Activated naive CD4-positive, alpha-beta T cell treated with anti-CD3 and anti-CD28 coated beads for 36 hours (primary cell): ENCODE measurements at regions of chr10 and their contacts with region 1.

Region 1: DNA sequence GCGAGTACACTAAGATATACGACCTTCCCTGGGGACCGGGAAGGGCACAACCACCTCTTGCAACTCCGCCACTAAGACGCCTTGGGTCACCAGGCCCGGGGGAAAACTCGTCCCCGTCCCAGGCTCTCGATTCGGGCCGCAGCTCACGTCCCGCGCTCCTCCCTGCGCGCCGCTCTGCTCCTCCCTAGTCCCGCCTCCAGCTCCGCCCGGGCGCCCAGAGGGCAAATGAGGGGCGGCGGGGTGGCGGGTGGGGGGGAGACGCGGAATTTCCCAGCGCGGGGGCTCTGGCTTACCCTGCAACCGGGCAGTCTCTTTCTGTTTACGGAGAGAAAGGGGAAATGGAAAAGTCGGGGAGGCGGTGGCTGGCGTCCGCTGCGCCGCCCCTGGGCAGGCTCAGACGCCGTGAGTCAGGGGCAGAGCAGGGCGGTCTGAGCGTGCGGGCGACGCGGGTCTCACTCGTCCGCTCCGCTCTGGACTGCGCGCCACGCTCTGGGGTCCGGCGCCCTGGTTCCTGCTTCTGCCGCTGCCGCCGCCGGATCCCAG is at the start of gene MAP3K8:
- DNase-seq: peak; percentile 87
- H3K4me3 Mint-ChIP-seq: peak within 1 kb of the TSS; percentile 84
- H3K27ac Mint-ChIP-seq: peak within 1 kb of the TSS; percentile 67
- H3K4me1 Mint-ChIP-seq: peaks cover 41% of the 10 kb centered on the region
- H3K27me3 Mint-ChIP-seq: no peaks in the 10 kb centered on the region
- total RNA-seq, gene MAP3K8: 13.6 to 14.5 TPM

Region 2: DNA sequence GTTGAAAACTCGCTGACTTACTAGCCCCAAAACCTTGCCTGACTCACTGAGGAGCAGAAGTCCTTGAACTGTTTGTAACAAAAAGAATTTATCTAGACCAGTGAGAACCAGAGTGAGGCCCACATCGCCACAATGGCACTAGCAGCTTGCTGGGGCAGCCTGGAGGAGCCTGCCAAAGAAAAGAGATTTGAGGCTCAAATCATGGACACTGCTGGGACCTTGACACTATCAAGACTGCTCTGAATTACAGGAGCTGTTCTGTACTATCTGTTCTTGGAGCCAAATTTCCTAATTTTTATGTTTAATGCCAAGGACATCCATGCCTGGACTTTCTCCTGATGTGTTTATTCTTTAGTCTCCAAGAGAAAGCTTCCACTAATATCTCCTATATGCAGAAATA is 292.4 kb before region 1 on chr10:
- CTCF ChIA-PET with region 1: no interaction called
- intact Hi-C with region 1: no loop called
- DNase-seq: no peak
- H3K4me3 Mint-ChIP-seq: no peak overlapping the region
- H3K27ac Mint-ChIP-seq: no peak overlapping the region
- H3K4me1 Mint-ChIP-seq: no peaks in the 10 kb centered on the region
- H3K27me3 Mint-ChIP-seq: peaks cover 2% of the 10 kb centered on the region

Region 3: GRCh38 chr10:30348378-30348776 is 85.4 kb before region 1 on chr10:
- CTCF ChIA-PET with region 1: no interaction called
- intact Hi-C with region 1: loop called (anchors 2 kb)
- DNase-seq: no peak
- H3K4me3 Mint-ChIP-seq: peak overlapping the region; percentile 96
- H3K27ac Mint-ChIP-seq: peak overlapping the region; percentile 95
- H3K4me1 Mint-ChIP-seq: peaks cover 41% of the 10 kb centered on the region
- H3K27me3 Mint-ChIP-seq: no peaks in the 10 kb centered on the region

Region 4: GRCh38 chr10:30413996-30414576 is 19.7 kb before region 1 on chr10:
- CTCF ChIA-PET with region 1: interaction called, 5 read pairs
- intact Hi-C with region 1: loop called (anchors 1 kb)
- DNase-seq: peak; percentile 43
- H3K4me3 Mint-ChIP-seq: no peak overlapping the region
- H3K27ac Mint-ChIP-seq: no peak overlapping the region
- H3K4me1 Mint-ChIP-seq: peaks cover 15% of the 10 kb centered on the region
- H3K27me3 Mint-ChIP-seq: no peaks in the 10 kb centered on the region

Region 5: DNA sequence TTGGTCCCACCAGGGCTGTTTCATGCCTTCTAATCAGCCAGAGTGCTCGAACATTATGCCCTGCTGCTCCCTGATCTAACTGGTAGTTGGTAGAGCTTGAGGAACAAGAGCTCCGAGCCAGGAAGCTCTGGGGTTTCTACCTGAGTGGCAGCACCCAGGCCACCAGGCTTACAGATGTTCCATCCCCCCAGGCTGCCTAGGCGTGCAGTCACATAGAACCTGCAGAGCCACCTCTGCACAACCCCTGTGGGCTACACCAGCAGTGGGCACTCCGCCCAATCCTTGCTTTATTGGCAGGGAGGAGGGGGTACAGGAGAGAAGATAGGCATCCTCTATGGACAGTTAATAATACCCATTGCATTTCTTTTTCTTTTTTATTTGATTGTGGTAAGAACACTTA is 22.0 kb after region 1 on chr10:
- CTCF ChIA-PET with region 1: interaction called, 4 read pairs
- intact Hi-C with region 1: loop called (anchors 1 kb)
- DNase-seq: peak; percentile 17
- H3K4me3 Mint-ChIP-seq: no peak overlapping the region
- H3K27ac Mint-ChIP-seq: peak overlapping the region; percentile 13
- H3K4me1 Mint-ChIP-seq: peaks cover 16% of the 10 kb centered on the region
- H3K27me3 Mint-ChIP-seq: no peaks in the 10 kb centered on the region

Region 6: DNA sequence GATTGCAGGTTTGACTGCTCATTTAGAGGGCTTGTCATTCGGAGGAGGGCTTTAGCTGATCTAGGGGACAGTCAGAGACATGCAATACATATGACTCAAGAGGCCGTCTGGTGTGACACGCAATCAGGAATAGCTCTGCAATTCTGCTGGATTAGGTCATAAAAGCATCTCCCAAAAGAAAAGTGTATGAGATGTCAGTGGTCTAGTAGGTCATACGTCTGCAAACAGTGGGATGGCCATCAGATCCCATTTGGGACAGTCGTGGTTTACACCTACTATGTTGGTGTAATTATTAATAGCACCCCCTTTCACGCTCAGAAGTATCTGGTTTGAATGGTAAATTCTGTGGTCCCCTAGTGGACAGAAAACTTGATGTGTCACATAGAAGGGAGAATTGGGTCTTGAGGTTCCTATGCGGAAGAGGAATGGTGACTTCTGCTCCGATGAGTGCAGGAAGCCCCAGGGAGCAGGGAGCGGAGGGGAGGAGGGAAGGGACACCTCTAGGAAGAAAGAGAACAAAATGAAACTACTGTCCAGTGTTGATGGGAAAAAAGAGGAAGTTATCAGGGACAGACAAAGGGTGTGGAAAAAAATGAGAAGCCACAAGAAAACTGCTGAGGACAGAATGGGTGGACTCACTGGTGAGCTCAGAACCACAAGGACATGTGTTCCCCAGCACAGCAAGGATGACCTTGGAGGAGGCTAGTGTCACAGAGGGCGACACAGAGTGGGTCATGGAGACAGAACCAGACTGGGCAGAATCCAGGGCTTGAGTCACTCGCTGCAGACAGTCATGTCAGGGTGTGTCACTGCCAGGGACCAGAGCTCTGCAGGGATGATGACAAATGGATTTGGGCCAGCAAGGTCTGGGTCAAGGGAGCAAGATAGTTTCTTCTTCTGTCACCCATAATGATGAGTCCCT is 60.1 kb after region 1 on chr10:
- CTCF ChIA-PET with region 1: no interaction called
- intact Hi-C with region 1: no loop called
- DNase-seq: no peak
- H3K4me3 Mint-ChIP-seq: no peak overlapping the region
- H3K27ac Mint-ChIP-seq: no peak overlapping the region
- H3K4me1 Mint-ChIP-seq: peaks cover 40% of the 10 kb centered on the region
- H3K27me3 Mint-ChIP-seq: no peaks in the 10 kb centered on the region

Region 7: GRCh38 chr10:30529373-30529998 is 95.7 kb after region 1 on chr10:
- CTCF ChIA-PET with region 1: interaction called, 12 read pairs
- intact Hi-C with region 1: loop called (anchors 1 kb)
- DNase-seq: peak; percentile 88
- H3K4me3 Mint-ChIP-seq: peak overlapping the region; percentile 73
- H3K27ac Mint-ChIP-seq: peak overlapping the region; percentile 85
- H3K4me1 Mint-ChIP-seq: peaks cover 52% of the 10 kb centered on the region
- H3K27me3 Mint-ChIP-seq: no peaks in the 10 kb centered on the region

Region 8: GRCh38 chr10:31011017-31011659 is 577.3 kb after region 1 on chr10:
- CTCF ChIA-PET with region 1: no interaction called
- intact Hi-C with region 1: no loop called
- DNase-seq: no peak
- H3K4me3 Mint-ChIP-seq: no peak overlapping the region
- H3K27ac Mint-ChIP-seq: peak overlapping the region; percentile 10
- H3K4me1 Mint-ChIP-seq: peaks cover 18% of the 10 kb centered on the region
- H3K27me3 Mint-ChIP-seq: no peaks in the 10 kb centered on the region